SK-N-SH (cell line): ENCODE measurements at regions of chr1 and their contacts with region 1.

Region 1: DNA sequence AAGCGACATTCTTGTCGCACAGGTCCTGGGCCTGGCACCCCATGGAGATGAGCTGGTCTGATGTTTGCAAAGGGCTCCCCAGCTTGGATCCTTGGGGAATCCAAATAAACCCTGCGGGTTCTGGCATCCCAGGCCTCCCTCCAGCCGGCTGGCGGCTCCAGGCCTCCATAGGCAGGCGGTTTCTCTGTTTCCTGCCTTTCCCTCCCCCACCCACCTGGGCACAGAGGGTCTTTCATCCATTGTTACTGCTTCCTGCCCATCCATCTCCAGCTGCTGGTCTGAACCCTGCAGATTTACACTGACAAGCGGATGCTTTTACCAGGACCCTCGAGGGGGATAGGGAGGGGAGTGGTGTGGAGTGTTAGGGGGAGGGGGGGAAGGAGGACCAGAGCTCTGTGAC is 39.1 kb upstream of the ID3 start:
- DNase-seq: peak; percentile 81
- H3K4me3 ChIP-seq: no peak overlapping the region
- H3K27ac ChIP-seq: peak overlapping the region in 1 of 2 experiments; percentile 82; a peak in 2 of 4 replicates
- H3K4me1 ChIP-seq: peaks cover 0 to 21% of the 10 kb centered on the region in 2 experiments; a peak in 2 of 4 replicates
- H3K27me3 ChIP-seq: no peaks in the 10 kb centered on the region
- CTCF ChIP-seq: no peak
- EP300 ChIP-seq: no peak
- RAD21 ChIP-seq: no peak

Region 2: GRCh38 chr1:23417570-23417969 is 180.9 kb before region 1 on chr1:
- CTCF ChIA-PET with region 1: no interaction called
- POLR2A ChIA-PET with region 1: no interaction called
- DNase-seq: peak; percentile 87
- H3K4me3 ChIP-seq: no peak overlapping the region
- H3K27ac ChIP-seq: peak overlapping the region in 1 of 2 experiments; percentile 80; a peak in 2 of 4 replicates
- H3K4me1 ChIP-seq: peaks cover 0 to 22% of the 10 kb centered on the region in 2 experiments; a peak in 1 of 4 replicates
- H3K27me3 ChIP-seq: no peaks in the 10 kb centered on the region
- CTCF ChIP-seq: no peak
- EP300 ChIP-seq: peak in 1 of 2 experiments; percentile 42; a peak in 1 of 4 replicates
- RAD21 ChIP-seq: no peak

Region 3: GRCh38 chr1:23559136-23559984 is 39.1 kb before region 1 on chr1 and contains the start of gene ID3:
- CTCF ChIA-PET with region 1: interaction called, 5 read pairs
- POLR2A ChIA-PET with region 1: interaction called, 14 read pairs
- DNase-seq: peak; percentile 83
- H3K4me3 ChIP-seq: peak within 1 kb of the TSS; percentile 88 to 92
- H3K27ac ChIP-seq: peak within 1 kb of the TSS; percentile 98 to 100
- H3K4me1 ChIP-seq: peaks cover 60 to 77% of the 10 kb centered on the region in 2 experiments
- H3K27me3 ChIP-seq: no peaks in the 10 kb centered on the region
- CTCF ChIP-seq: no peak
- EP300 ChIP-seq: peak; percentile 14 to 58; a peak in 3 of 4 replicates
- RAD21 ChIP-seq: 0 out of 2 replicates have a peak, but pooled peaks have one; percentile 0
- polyA plus RNA-seq, gene ID3: 394 and 504 TPM in 2 replicates

Region 4: GRCh38 chr1:23577056-23578004 is 21.1 kb before region 1 on chr1:
- CTCF ChIA-PET with region 1: interaction called, 4 read pairs
- POLR2A ChIA-PET with region 1: interaction called, 12 read pairs
- DNase-seq: no peak
- H3K4me3 ChIP-seq: peak overlapping the region in 1 of 2 experiments; percentile 46; a peak in 2 of 4 replicates
- H3K27ac ChIP-seq: peak overlapping the region; percentile 85 to 99
- H3K4me1 ChIP-seq: peaks cover 10 to 40% of the 10 kb centered on the region in 2 experiments
- H3K27me3 ChIP-seq: no peaks in the 10 kb centered on the region
- CTCF ChIP-seq: no peak
- EP300 ChIP-seq: peak in 1 of 2 experiments; percentile 57; a peak in 1 of 4 replicates
- RAD21 ChIP-seq: no peak